AG04450 (cell line): ENCODE measurements at regions of chr11 and their contacts with region 1.

Region 1: DNA sequence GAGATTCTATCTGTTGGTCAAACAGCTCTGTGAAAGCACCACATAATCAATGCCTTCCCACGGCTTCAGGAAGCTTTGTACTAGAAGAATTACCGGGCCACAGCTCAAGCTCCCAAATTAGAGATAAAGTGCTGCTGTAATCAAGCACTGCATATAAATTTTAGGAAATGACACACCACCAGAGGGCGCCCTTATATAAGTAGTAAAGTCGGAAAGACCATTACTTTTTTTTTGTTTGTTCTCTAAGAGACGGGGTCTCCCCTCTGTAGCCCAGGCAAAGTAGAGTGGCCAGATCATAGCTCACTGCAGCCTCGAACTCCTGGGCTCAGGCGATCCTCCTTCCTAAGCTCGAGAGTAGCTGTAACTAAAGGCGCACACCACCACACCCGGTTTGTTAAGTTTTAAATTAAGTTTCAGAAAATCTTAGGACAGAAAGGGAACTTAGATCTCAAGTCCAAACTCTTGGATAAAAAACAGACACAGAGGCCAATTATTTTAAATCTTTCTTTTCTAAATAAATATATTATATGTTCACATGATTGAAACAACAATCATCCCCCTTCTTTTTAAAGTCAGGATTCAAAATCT is 32.6 kb downstream of the PRCP start:
- DNase-seq: peak; percentile 48
- H3K4me3 ChIP-seq: no peak overlapping the region; the same call in 1 of the 2 replicates
- H3K27ac ChIP-seq: no peak overlapping the region
- H3K27me3 ChIP-seq: no peaks in the 10 kb centered on the region
- CTCF ChIP-seq: peak; percentile 76

Region 2: DNA sequence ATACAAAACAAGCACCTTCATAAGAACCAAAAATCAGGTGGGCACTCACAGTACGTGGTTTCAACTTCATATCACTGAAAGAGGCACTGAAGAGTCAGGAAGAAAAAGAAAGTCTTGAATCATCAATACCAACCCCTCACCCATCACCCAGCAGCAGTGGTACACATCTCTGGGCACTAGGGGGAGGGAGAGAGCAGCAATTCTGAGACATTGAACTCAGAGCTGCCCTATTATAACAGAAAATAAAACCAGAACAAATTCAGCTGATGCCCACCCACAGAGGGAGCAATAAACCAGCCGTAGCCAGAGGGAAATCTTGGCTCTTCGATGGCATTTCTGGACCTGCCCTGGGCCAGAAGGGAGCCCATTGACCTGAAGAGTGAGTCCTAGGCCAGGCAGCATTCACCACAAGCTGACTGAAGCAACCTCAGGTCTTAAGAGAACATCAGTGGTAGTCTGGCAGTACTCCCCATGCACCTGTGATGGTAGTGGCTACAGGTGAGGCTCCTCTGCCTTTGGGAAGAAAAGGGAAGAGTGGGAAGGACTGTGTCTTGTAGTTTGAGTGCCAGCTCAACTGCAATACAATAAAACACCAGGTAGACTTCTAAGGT is 91.7 kb before region 1 on chr11:
- CTCF ChIA-PET with region 1: interaction called, 18 read pairs
- POLR2A ChIA-PET with region 1: no interaction called
- DNase-seq: peak; percentile 8
- H3K4me3 ChIP-seq: 0 out of 2 replicates have a peak overlapping the region, but pooled peaks have one; percentile 5
- H3K27ac ChIP-seq: no peak overlapping the region
- H3K27me3 ChIP-seq: no peaks in the 10 kb centered on the region
- CTCF ChIP-seq: peak; percentile 92

Region 3: GRCh38 chr11:82889133-82890001 is 21.8 kb after region 1 on chr11:
- CTCF ChIA-PET with region 1: interaction called, 45 read pairs
- POLR2A ChIA-PET with region 1: no interaction called
- DNase-seq: no peak
- H3K4me3 ChIP-seq: no peak overlapping the region
- H3K27ac ChIP-seq: no peak overlapping the region
- H3K27me3 ChIP-seq: no peaks in the 10 kb centered on the region
- CTCF ChIP-seq: no peak

Region 4: GRCh38 chr11:82924522-82925224 is 57.1 kb after region 1 on chr11:
- CTCF ChIA-PET with region 1: interaction called, 14 read pairs
- POLR2A ChIA-PET with region 1: no interaction called
- DNase-seq: no peak
- H3K4me3 ChIP-seq: no peak overlapping the region
- H3K27ac ChIP-seq: no peak overlapping the region
- H3K27me3 ChIP-seq: no peaks in the 10 kb centered on the region
- CTCF ChIP-seq: no peak

Region 5: GRCh38 chr11:83235825-83236224 is 368.2 kb after region 1 on chr11:
- CTCF ChIA-PET with region 1: interaction called, 17 read pairs
- POLR2A ChIA-PET with region 1: no interaction called
- DNase-seq: no peak
- H3K4me3 ChIP-seq: no peak overlapping the region
- H3K27ac ChIP-seq: no peak overlapping the region
- H3K27me3 ChIP-seq: no peaks in the 10 kb centered on the region
- CTCF ChIP-seq: no peak

Region 6: GRCh38 chr11:83292709-83293456 is 425.3 kb after region 1 on chr11:
- CTCF ChIA-PET with region 1: interaction called, 12 read pairs
- POLR2A ChIA-PET with region 1: no interaction called
- DNase-seq: peak; percentile 29
- H3K4me3 ChIP-seq: peak overlapping the region; percentile 34; the same call in 1 of the 2 replicates
- H3K27ac ChIP-seq: no peak overlapping the region
- H3K27me3 ChIP-seq: no peaks in the 10 kb centered on the region
- CTCF ChIP-seq: peak; percentile 84